Activated CD8-positive, alpha-beta memory T cell treated with anti-CD3 and anti-CD28 coated beads, Interleukin-2, amount 10 ng/mL, durations not matched to agents 7 days and 5 days (primary cell): ENCODE measurements at regions of chr19 and their contacts with region 1.

Region 1: DNA sequence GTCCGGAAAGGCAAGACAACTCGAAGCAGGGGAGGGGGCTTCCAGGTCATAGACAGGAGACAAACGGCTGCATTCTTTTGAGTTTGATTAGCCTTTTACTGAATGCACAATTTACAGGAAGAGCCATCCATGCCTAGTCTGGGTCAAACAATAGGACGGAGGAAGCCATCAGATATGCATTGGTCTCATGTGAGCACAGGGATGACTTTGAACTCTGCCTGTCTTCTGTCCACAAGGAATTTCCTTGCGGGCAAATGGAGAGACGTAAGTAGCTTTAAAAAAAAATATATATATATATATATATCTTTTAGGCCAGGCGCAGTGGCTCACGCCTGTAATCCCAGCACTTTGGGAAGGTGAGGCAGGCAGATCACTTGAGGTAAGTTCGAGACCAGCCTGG is 1.9 kb upstream of the CCNP start:
- DNase-seq: no peak
- ATAC-seq: no peak
- H3K4me3 Mint-ChIP-seq: no peak overlapping the region
- H3K27ac Mint-ChIP-seq: no peak overlapping the region
- H3K4me1 Mint-ChIP-seq: peaks cover 18% of the 10 kb centered on the region
- H3K27me3 Mint-ChIP-seq: peaks cover 46% of the 10 kb centered on the region

Region 2: GRCh38 chr19:40217027-40217810 is 11.2 kb before region 1 on chr19:
- CTCF ChIA-PET with region 1: interaction called, 11 read pairs
- DNase-seq: no peak
- ATAC-seq: no peak
- H3K4me3 Mint-ChIP-seq: no peak overlapping the region
- H3K27ac Mint-ChIP-seq: no peak overlapping the region
- H3K4me1 Mint-ChIP-seq: peaks cover 9% of the 10 kb centered on the region
- H3K27me3 Mint-ChIP-seq: peaks cover 41% of the 10 kb centered on the region